Calu3 (cell line): ENCODE measurements at regions of chr1 and their contacts with region 1.

Region 1: DNA sequence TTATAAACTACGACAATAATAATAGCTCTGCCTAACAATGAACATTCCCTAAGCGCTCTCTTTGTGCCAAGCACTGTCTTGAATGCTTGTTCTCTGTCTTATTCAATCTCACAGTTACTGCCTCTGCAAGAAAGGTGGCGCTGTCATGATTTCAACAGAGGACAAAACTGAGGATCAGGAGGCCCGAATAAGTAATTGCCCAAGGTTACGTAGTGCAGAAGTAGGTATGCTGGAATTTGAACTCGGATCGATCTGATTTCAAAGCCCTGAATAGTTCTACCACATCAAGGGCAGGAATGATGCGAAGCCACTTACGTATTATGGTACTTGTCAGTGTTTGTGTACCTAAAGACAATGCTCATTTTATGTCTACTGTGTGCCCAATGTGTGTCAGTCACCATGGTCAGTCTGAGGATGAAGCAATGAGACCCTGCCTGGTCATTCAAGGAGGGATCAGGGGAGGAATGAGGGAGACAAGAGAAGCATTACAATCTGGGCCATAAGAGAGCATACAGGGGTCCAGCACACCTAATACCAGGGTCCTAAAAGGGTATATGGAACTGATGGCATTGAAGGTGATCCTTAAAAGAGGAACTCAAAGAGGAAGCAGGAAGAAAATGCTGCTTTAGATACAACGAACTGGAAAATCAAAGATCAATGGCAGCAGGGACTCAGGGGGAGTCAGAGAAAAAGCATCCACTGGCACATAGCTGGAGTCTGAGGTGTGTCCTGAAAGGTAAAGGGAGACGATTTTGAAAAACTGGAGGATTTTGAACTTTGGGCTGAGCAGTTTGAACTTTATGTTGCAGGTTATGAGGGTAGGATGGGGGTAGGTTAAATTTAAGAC is 389.2 kb downstream of the PLPP3 start:
- DNase-seq: peak; percentile 49
- H3K4me3 Mint-ChIP-seq: peak overlapping the region; percentile 35
- H3K27ac Mint-ChIP-seq: peak overlapping the region; percentile 99
- H3K4me1 Mint-ChIP-seq: peaks cover 15% of the 10 kb centered on the region
- H3K27me3 Mint-ChIP-seq: no peaks in the 10 kb centered on the region
- CTCF ChIP-seq: no peak

Region 2: GRCh38 chr1:56229186-56229585 is 39.0 kb after region 1 on chr1:
- CTCF ChIA-PET with region 1: no interaction called
- intact Hi-C with region 1: loop called (anchors 5 kb)
- DNase-seq: no peak
- H3K4me3 Mint-ChIP-seq: no peak overlapping the region
- H3K27ac Mint-ChIP-seq: no peak overlapping the region
- H3K4me1 Mint-ChIP-seq: peaks cover 27% of the 10 kb centered on the region
- H3K27me3 Mint-ChIP-seq: no peaks in the 10 kb centered on the region
- CTCF ChIP-seq: no peak

Region 3: GRCh38 chr1:56330391-56331026 is 140.3 kb after region 1 on chr1:
- CTCF ChIA-PET with region 1: no interaction called
- intact Hi-C with region 1: loop called (anchors 2 kb)
- DNase-seq: no peak
- H3K4me3 Mint-ChIP-seq: peak overlapping the region; percentile 24
- H3K27ac Mint-ChIP-seq: peak overlapping the region; percentile 94
- H3K4me1 Mint-ChIP-seq: peaks cover 46% of the 10 kb centered on the region
- H3K27me3 Mint-ChIP-seq: no peaks in the 10 kb centered on the region
- CTCF ChIP-seq: no peak

Region 4: DNA sequence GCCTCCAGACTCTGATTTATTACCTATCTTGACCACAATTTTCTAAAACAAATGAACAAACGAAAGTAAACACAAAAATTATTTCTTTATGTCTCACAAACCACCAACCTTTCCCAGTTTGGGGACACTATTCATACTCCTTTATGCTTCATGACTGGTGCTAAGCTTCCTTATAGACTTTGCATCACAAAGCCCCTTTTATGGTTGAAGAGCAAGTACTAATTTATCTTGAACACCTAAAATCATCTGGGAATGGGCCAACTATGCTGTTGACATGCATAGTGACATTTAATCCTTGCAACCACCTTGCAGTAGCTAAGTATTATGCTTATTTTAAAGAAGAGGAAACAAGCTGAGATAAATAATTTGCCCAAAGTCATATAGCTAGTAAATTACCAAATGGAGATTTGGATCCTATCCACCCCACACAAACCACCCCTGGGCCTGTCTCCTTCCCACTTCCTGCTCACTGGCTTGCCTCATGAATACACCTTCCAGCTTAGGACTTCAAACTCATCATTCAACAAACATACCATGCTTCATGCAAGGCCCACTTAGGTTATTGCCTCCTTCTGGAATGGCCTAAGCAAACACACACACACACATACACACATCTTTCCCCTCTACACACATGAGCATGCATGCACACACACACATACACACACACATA is 197.0 kb after region 1 on chr1:
- CTCF ChIA-PET with region 1: no interaction called
- intact Hi-C with region 1: loop called (anchors 1 kb)
- DNase-seq: peak; percentile 25
- H3K4me3 Mint-ChIP-seq: no peak overlapping the region
- H3K27ac Mint-ChIP-seq: peak overlapping the region; percentile 27
- H3K4me1 Mint-ChIP-seq: peaks cover 20% of the 10 kb centered on the region
- H3K27me3 Mint-ChIP-seq: no peaks in the 10 kb centered on the region
- CTCF ChIP-seq: no peak